Prostate gland (tissue), 2 donors: ENCODE measurements at regions of chr19 and their contacts with region 1.

Region 1: DNA sequence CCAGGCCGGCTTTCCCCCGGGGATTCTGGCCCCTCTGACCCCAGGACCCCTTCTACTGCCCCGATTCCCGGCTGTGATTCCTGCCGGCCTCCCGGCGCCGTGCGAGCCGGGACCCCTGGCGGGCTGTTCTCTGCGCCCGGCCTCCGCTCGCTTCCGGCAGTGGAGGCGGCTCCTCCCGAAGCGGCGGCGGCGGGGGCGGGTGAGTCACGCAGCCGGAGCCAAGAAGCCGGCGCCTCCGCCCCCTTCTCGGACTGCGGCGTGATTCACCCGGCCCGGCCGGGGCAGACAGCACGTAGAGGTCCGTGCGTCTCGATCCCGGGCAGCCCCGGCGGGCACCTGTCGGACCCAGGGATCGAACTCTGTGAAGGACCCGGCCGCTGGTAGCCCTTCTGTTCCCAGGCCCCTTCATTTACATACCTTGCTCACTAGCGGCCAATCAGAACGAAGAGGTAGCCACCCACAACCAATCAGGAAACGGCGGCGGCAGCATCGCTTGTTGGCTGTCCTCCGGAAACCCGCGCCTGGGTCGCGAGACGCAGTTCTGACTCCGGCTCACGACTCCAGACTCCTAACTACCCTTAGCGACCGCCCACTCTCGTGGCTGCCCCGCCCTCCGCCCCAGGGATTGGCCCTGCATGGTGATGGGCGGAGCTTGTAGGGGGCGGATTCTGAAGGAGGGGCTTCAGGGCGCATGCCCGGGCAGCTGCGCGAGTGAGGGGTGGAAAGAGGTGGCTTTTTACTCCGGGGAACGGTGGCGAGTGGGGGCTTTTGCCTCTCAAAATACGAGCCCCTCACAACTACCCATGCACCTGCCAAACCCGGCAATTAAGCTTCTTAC is at the start of gene SERTAD1:
- DNase-seq: peak; percentile 100
- H3K4me3 ChIP-seq: peak within 1 kb of the TSS; percentile 95 to 98
- H3K27ac ChIP-seq: peak within 1 kb of the TSS; percentile 100
- H3K4me1 ChIP-seq: peaks cover 4% of the 10 kb centered on the region
- H3K27me3 ChIP-seq: no peaks in the 10 kb centered on the region
- CTCF ChIP-seq: peak; percentile 67 to 92 (median 88)
- POLR2A ChIP-seq: peak; percentile 100
- total RNA-seq, gene SERTAD1: 15.9 to 19.5 TPM

Region 2: DNA sequence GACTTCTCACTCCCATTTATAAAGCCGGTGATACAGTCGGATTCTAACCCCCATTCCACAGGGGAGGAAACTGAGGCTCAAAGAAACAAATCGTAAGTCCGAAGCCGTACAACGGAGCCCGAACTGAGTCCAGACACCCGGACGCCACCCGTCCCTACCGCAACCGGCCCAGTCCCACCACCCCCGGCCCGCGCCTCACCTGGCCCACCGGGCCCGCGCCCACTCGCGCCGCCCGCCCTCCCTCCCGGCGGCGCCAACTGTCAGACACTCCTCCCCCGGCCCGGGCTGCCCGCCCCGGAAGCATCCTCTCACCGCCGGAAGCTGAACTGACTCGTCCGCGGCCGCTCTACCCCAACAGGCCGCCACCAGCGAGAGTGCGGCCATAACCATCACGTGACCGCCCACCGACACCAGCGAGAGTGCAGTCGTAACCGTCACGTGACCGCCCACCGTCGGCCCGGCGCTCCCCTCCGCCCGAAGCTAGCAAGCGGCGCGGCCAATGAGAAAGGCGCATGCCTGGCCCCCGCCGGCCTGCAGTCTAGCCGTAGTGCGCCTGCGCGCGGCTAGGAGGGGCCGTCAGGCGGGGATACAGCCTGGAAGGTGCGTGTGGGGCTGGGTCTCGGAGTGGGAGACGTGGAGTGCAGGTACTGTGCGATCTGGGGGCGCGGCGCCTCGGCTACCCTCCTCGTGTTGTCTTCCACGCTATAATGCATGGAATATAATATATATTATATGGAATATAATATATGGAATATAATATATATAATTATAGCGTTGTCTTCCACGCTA is 77.3 kb before region 1 on chr19 and contains the starts of genes C19orf47 and PLD3:
- intact Hi-C with region 1: loop called (anchors 5 kb)
- DNase-seq: peak; percentile 100
- H3K4me3 ChIP-seq: peak within 1 kb of the TSS; percentile 56 to 61
- H3K27ac ChIP-seq: peak within 1 kb of the TSS; percentile 65 to 76
- H3K4me1 ChIP-seq: peaks cover 4% of the 10 kb centered on the region
- H3K27me3 ChIP-seq: no peaks in the 10 kb centered on the region
- CTCF ChIP-seq: peak in 2 of 4 experiments; percentile 48 to 49
- POLR2A ChIP-seq: peak; percentile 94
- total RNA-seq, gene C19orf47: 20.8 to 27.3 TPM
- total RNA-seq, gene PLD3: 328 to 639 TPM

Region 3: GRCh38 chr19:40366697-40367561 is 58.7 kb before region 1 on chr19:
- intact Hi-C with region 1: no loop called
- DNase-seq: no peak
- H3K4me3 ChIP-seq: no peak overlapping the region
- H3K27ac ChIP-seq: no peak overlapping the region
- H3K4me1 ChIP-seq: no peaks in the 10 kb centered on the region
- H3K27me3 ChIP-seq: no peaks in the 10 kb centered on the region
- CTCF ChIP-seq: no peak
- POLR2A ChIP-seq: no peak

Region 4: DNA sequence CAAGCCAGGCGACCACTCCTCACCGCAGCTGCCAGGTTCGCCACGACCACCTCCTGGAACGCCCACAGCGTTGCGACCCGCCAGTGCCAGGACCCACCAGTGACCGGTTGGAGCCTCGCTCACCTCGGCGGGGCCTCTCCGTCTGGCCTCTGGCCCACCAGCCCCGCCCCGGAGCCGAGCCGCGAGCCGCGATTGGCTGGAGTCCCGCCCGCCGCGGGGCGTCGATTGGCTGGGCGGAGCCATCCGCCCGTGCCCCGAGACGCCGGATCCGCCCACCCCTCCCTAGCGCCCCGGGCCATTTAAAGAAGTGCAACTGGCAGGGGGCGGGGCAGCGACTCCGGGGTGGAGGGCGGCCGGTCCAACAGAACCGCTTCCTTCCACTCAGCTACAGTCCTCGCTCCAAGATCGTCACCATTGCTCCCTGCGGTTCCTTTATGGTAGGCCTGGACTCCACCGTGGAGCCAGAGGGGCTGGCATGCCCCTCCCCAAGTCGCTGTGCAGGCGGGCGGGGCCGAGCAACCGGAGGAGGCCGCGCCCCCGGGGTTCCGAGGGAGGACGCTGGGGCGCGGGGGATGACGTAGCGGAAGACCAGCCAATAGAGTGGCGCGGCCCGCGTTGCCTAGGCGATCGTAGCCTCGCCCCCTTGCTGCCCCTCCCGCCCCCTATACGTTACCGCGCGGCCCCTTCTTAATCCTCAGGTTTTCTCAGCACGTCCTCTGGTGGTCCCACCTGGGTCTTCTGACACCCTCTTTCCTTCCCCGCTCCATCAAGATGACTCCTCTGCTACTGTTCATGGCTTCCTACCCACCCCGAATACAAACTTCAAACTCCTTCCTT is 18.7 kb after region 1 on chr19 and contains the start of gene SERTAD3:
- intact Hi-C with region 1: loop called (anchors 1 kb)
- DNase-seq: peak; percentile 97
- H3K4me3 ChIP-seq: peak within 1 kb of the TSS; percentile 85 to 97
- H3K27ac ChIP-seq: peak within 1 kb of the TSS; percentile 99
- H3K4me1 ChIP-seq: peaks cover 19% of the 10 kb centered on the region
- H3K27me3 ChIP-seq: no peaks in the 10 kb centered on the region
- CTCF ChIP-seq: peak in 2 of 4 experiments; percentile 27 to 29
- POLR2A ChIP-seq: peak; percentile 99
- total RNA-seq, gene SERTAD3: 22.7 to 37.3 TPM